Activated CD8-positive, alpha-beta T cell treated with anti-CD3 and anti-CD28 coated beads for 36 hours (primary cell): ENCODE measurements at regions of chr3 and their contacts with region 1.

Region 1: DNA sequence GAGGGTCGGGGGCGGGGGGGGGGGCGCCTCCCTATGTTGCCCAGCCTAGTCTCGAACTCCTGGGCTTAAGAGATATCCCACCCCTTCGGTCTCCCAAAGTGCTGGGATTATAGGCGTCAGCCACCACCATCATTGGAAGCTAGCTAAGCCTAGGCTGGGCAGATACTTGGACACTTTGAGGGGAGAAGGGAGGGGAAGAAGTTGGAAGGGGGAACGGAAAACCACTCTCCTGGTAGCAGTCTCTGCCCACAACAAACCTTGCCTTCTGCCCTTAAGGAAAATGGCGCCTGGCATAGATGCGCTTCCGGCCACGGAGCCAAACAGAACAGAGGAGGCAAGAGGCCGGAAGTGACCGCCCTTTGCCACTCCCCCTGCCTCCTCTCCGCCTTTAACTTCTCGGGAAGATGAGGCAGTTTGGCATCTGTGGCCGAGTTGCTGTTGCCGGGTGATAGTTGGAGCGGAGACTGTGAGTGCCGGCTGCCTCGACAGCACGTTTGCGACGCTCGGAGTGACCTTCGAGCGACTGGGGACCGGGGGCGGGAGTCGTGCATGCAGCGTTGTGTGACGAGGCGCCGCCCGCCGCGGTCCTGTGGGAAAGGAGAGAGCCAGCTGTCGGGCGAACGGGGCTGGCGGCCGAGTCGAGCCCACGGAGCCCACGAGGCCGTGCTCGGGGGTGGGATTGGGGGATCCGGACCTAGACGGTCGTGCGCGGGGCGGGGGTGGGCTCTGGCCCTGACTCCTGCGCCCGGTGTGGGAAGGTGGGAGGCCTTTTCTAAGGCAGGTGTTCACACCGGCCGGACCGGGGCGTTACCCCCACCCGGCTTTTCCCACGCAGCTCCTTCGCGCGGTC is at the start of gene MFN1:
- DNase-seq: peak; percentile 95
- ATAC-seq: peak; percentile 96
- H3K4me3 Mint-ChIP-seq: peak within 1 kb of the TSS; percentile 98
- H3K27ac Mint-ChIP-seq: peak within 1 kb of the TSS; percentile 92
- H3K4me1 Mint-ChIP-seq: peaks cover 11% of the 10 kb centered on the region
- H3K27me3 Mint-ChIP-seq: no peaks in the 10 kb centered on the region
- CTCF ChIP-seq: no peak
- total RNA-seq, gene MFN1: 31.9 to 34.8 TPM

Region 2: DNA sequence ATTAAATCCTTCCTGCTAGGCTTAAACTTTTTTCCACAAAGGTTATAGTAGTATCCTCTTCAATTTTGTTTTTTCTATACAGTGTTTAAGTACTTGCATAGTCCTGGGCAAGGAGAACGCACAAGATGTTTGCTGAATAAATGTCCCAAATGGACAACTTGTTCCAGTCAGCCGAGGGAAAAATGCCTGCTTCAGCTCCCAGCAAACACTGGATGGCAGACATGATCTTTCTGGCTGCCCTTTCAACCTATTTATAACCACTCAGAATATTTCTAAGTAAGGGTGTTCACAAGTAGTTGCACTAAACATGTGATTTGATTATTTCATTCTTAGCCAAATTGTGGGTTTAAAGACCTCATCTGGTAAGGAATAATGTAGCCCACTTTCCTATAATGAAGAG is 73.9 kb after region 1 on chr3:
- CTCF ChIA-PET with region 1: no interaction called
- POLR2A ChIA-PET with region 1: no interaction called
- intact Hi-C with region 1: no loop called
- DNase-seq: no peak
- ATAC-seq: no peak
- H3K4me3 Mint-ChIP-seq: no peak overlapping the region
- H3K27ac Mint-ChIP-seq: no peak overlapping the region
- H3K4me1 Mint-ChIP-seq: no peaks in the 10 kb centered on the region
- H3K27me3 Mint-ChIP-seq: no peaks in the 10 kb centered on the region
- CTCF ChIP-seq: no peak

Region 3: GRCh38 chr3:179562591-179563270 is 215.2 kb after region 1 on chr3 and contains the start of gene ACTL6A:
- CTCF ChIA-PET with region 1: interaction called, 6 read pairs
- POLR2A ChIA-PET with region 1: interaction called, 5 read pairs
- intact Hi-C with region 1: loop called (anchors 5 kb)
- DNase-seq: peak; percentile 99
- ATAC-seq: peak; percentile 91
- H3K4me3 Mint-ChIP-seq: peak within 1 kb of the TSS; percentile 86
- H3K27ac Mint-ChIP-seq: peak within 1 kb of the TSS; percentile 99
- H3K4me1 Mint-ChIP-seq: peaks cover 28% of the 10 kb centered on the region
- H3K27me3 Mint-ChIP-seq: peaks cover 3% of the 10 kb centered on the region
- CTCF ChIP-seq: no peak
- total RNA-seq, gene ACTL6A: 87.1 to 88.4 TPM